Activated CD4-positive, alpha-beta T cell treated with anti-CD3 and anti-CD28 coated beads, Interleukin-2, amount 10 ng/mL, durations not matched to agents 24 days and 14 days (primary cell): ENCODE measurements at regions of chr2 and their contacts with region 1.

Region 1: GRCh38 chr2:231706731-231707624 is 1.3 kb upstream of the PTMA start:
- DNase-seq: peak; percentile 99
- H3K4me3 Mint-ChIP-seq: peak overlapping the region; percentile 92
- H3K27ac Mint-ChIP-seq: peak overlapping the region; percentile 100
- H3K4me1 Mint-ChIP-seq: peaks cover 23% of the 10 kb centered on the region
- H3K27me3 Mint-ChIP-seq: peaks cover 1% of the 10 kb centered on the region

Region 2: DNA sequence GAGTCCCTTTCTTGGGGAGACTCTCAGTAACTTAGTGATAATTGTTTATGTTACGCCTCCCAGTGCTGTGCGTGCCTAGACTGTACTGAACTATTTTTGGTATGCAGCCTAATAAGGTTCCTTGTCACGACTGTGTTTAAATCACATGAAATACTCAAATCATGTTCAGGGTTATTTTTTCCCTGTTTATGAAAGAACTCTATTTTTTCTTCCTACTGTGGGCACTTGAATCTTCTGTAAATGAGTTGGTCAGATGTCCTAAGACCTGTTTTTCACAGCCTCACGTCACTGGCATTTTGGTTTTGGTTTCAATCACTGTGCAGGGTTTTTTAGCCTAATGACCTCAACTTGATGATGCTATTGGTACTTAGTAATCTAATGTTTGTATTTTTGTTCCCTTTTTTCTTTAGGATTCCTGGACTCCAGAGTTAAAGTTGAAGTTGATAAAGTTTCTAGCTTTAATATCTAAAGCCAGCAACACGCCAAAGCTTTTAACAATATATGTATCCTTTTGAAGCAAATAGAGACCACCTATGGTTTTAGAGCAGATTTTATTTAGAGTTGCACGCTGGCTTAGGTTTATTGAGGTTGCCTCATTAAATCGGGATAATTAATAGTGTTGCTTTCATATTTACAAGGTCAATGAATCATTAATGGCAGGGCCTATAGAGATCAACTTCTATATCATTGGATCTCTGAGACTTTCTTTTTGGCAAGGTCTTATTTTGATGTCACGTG is 484.5 kb before region 1 on chr2:
- intact Hi-C with region 1: no loop called
- DNase-seq: no peak
- H3K4me3 Mint-ChIP-seq: no peak overlapping the region
- H3K27ac Mint-ChIP-seq: no peak overlapping the region
- H3K4me1 Mint-ChIP-seq: no peaks in the 10 kb centered on the region
- H3K27me3 Mint-ChIP-seq: peaks cover 3% of the 10 kb centered on the region

Region 3: DNA sequence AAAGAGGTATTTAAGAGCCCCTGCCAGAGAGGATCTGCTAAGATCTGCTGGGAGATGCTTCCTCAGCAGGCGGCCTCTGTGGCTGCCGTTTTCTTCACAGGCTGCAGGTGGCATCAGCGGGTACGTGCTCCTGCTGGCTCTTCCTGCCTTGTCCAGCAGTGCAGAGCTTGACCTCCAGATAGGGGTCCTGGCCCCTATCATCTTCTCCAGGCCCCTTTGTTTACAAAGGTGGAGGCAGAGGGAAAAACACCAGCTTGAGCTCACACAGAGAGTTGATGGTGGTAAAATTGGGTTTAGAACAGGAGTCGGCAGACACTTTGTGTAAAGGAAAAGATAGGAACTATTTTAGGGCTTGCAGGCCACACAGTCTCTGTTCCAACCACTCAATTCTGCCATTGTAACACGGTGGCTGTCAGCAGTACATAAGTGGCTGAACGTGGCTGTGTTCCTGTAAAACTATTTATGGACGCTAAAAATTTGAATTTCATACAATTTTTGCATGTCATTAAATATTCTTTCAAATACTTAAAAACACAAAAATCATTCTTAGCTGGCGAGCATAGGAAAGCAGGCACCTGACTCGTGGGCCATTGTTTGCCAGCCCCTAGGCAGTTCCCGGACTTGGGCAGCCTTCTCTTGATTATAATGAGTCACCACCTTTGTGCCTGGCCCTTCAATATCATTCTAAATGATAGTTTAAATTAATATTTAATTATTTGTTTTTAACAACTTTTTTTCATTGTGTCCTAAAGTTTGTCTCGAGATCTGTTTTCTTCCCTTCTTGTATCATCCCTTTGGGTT is 409.7 kb before region 1 on chr2:
- intact Hi-C with region 1: no loop called
- DNase-seq: peak; percentile 68
- H3K4me3 Mint-ChIP-seq: no peak overlapping the region
- H3K27ac Mint-ChIP-seq: no peak overlapping the region
- H3K4me1 Mint-ChIP-seq: peaks cover 3% of the 10 kb centered on the region
- H3K27me3 Mint-ChIP-seq: peaks cover 6% of the 10 kb centered on the region

Region 4: DNA sequence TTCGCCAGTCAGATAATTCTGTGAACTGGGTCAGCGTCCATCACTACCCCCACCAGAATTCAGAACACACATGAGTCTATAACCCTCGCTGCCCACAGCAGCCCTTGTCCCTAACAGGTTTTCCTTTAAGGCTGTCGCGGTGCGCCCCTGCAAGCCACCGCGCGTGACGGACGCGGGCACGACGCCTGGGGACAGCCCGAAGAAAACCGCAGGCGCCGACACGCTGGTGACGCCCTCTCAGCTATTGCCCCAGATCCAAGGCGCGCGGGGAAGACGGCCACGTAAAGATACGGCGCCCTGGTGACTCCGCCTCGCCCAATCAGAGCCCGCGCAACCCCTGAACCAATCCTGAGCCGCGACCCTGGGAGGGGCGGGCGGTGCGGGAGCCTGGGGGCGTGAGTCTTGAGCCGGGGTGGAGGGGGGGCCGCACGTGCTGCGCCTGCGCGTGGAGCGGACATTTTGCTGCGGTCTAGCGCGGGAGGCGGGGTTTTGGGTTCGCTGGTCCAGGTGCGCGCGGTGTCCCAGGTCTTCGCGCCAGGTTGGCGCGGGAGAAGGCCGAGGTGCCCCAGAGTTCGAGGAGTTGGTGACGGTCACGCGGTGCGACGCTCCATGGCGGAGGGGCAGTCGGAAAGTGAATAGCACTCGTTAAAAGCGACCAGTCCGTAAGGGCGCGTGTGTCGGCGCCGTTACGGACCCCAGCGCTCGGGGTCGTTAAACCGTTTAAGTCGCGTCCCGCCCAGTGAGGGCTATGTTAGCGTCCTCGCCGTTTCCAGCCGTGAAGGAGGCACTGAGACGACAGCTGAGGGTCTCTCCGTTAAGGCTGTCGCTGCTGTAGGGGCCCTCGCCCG is 192.7 kb before region 1 on chr2:
- intact Hi-C with region 1: loop called (anchors 1 kb)
- DNase-seq: peak; percentile 99
- H3K4me3 Mint-ChIP-seq: peak overlapping the region; percentile 94
- H3K27ac Mint-ChIP-seq: peak overlapping the region; percentile 97
- H3K4me1 Mint-ChIP-seq: peaks cover 13% of the 10 kb centered on the region
- H3K27me3 Mint-ChIP-seq: peaks cover 6% of the 10 kb centered on the region

Region 5: DNA sequence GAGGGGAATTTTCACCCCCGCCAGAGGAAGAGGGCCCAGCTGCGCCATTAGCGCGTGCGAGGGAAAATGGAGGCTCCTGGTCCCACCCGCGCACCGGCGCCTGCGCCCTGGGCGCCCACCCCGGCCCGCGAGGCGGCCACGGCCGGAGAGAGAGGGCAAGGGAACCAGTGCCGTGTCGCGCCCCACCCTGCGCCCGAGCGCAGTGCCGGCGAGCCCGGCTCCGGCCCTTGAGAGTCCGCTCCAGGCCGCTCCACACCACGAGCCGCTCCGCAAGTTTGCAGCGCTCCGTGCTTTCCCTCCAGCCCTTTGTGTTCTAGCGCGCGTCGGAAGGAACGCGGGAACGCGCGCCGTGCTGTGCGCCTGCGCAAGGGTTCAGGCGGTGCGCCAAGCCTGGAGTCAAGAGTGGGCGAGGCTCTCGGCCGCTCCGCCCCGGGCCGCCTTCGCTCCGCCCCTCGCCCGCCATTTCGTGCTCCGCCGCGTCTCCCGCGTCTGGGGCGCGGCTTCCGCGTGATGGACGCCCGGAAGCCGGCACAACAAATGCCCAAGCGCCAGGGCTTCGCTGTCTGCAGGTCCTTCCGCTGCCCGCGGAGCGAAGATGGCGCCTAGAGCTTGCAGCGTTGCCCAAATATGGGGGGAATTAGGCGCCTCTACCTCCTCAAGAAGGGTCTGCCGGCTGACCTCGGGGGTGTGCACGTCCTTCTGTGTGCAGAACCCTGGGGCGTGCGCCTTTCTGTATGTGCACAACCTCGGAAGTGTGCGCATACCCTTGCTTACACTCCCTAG is 44.8 kb before region 1 on chr2:
- intact Hi-C with region 1: loop called (anchors 1 kb)
- DNase-seq: peak; percentile 100
- H3K4me3 Mint-ChIP-seq: peak overlapping the region; percentile 70
- H3K27ac Mint-ChIP-seq: peak overlapping the region; percentile 98
- H3K4me1 Mint-ChIP-seq: peaks cover 22% of the 10 kb centered on the region
- H3K27me3 Mint-ChIP-seq: no peaks in the 10 kb centered on the region

Region 6: DNA sequence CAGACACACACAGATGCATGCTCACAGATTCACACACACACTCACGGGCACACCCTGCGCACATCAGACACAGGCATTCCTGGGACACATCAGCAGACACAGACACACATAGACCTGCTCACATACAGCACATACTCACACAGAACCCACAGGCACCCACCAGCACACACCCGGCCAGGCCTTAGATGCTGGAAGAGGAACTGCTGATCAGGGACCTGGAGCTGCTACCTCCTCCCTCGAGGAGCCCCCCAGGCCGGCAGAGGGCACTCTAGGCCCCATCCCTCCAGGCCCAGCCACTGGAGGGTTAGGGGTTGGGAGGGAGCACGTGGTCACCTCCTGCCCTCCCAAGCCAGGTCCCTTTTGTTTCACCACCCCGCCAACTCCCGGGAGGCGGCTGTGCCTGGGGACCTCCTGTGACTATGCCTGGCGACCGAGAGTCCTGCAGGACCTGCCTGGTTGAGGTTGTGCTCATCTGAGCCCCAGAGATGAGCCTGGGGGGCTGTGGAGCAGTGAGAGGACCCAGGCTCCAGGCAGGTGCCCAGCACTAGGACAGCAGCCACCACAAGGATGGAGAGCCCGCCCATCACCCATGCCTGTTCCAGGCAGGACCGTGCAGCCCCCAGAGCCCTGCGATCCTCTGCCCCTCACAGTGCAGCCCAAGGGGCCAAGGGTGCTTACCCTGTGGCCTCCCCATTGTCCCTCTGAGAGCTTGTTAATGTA is 19.7 kb before region 1 on chr2:
- intact Hi-C with region 1: loop called (anchors 2 kb)
- DNase-seq: peak; percentile 87
- H3K4me3 Mint-ChIP-seq: no peak overlapping the region
- H3K27ac Mint-ChIP-seq: no peak overlapping the region
- H3K4me1 Mint-ChIP-seq: peaks cover 5% of the 10 kb centered on the region
- H3K27me3 Mint-ChIP-seq: peaks cover 8% of the 10 kb centered on the region

Region 7: GRCh38 chr2:232550354-232551249 is 843.6 kb after region 1 on chr2 and contains the starts of genes EIF4E2 and TIGD1:
- intact Hi-C with region 1: loop called (anchors 2 kb)
- DNase-seq: peak; percentile 97
- H3K4me3 Mint-ChIP-seq: peak within 1 kb of the TSS; percentile 96
- H3K27ac Mint-ChIP-seq: peak within 1 kb of the TSS; percentile 100
- H3K4me1 Mint-ChIP-seq: peaks cover 61% of the 10 kb centered on the region
- H3K27me3 Mint-ChIP-seq: no peaks in the 10 kb centered on the region
- total RNA-seq, gene EIF4E2: 89.9 and 93.2 TPM in 2 replicates
- total RNA-seq, gene TIGD1: 8.5 and 9.4 TPM in 2 replicates